ENCODE measurements at regions of chr10 and their contacts with region 1.

Region 1: GRCh38 chr10:122342293-122343134 is 32.0 kb upstream of the PLEKHA1 start:
- DNase-seq: no peak
- H3K4me3 Mint-ChIP-seq: no peak overlapping the region
- H3K27ac Mint-ChIP-seq: no peak overlapping the region
- H3K4me1 Mint-ChIP-seq: peaks cover 5% of the 10 kb centered on the region
- H3K27me3 Mint-ChIP-seq: peaks cover 5% of the 10 kb centered on the region

Region 2: DNA sequence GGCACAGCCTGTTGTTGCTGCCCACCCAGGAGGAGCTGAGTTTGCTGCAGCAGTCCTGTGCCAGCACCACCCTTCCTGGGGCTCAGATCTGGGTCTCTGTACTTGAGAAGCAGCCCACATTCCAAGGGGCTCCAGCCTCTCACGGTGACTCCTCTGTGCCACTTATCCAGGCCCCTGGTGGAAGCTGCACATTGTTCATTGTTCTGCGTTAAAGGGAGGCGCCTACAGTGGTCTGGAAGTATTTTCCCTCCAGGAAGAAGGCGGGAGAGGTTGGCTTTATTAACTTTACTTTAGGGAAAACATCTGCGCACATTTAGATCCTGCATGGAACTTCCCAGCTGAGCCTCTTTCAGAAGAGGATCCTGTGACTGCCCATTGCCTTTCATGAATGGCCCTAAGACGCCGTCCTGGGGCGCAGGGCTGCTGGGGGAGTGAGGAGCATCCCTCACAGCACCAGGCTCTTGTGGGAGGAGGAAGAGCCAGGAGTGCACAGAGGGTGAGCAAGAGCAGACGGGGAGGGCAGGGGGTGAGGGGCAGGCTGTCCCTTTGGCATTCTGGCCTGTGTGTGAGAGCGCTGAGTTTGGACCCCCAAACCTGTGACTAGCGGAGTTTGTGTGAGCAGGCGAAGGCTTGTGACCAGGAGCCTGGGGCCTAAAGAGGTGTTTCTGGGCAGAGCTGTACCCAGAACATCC is 170.1 kb before region 1 on chr10:
- intact Hi-C with region 1: no loop called
- DNase-seq: no peak
- H3K4me3 Mint-ChIP-seq: no peak overlapping the region
- H3K27ac Mint-ChIP-seq: no peak overlapping the region
- H3K4me1 Mint-ChIP-seq: no peaks in the 10 kb centered on the region
- H3K27me3 Mint-ChIP-seq: no peaks in the 10 kb centered on the region

Region 3: GRCh38 chr10:122298598-122299301 is 43.8 kb before region 1 on chr10:
- intact Hi-C with region 1: loop called (anchors 2 kb)
- DNase-seq: peak; percentile 34
- H3K4me3 Mint-ChIP-seq: no peak overlapping the region
- H3K27ac Mint-ChIP-seq: no peak overlapping the region
- H3K4me1 Mint-ChIP-seq: peaks cover 10% of the 10 kb centered on the region
- H3K27me3 Mint-ChIP-seq: peaks cover 6% of the 10 kb centered on the region

Region 4: GRCh38 chr10:122323941-122324675 is 18.4 kb before region 1 on chr10:
- intact Hi-C with region 1: no loop called
- DNase-seq: no peak
- H3K4me3 Mint-ChIP-seq: no peak overlapping the region
- H3K27ac Mint-ChIP-seq: no peak overlapping the region
- H3K4me1 Mint-ChIP-seq: no peaks in the 10 kb centered on the region
- H3K27me3 Mint-ChIP-seq: peaks cover 5% of the 10 kb centered on the region

Region 5: DNA sequence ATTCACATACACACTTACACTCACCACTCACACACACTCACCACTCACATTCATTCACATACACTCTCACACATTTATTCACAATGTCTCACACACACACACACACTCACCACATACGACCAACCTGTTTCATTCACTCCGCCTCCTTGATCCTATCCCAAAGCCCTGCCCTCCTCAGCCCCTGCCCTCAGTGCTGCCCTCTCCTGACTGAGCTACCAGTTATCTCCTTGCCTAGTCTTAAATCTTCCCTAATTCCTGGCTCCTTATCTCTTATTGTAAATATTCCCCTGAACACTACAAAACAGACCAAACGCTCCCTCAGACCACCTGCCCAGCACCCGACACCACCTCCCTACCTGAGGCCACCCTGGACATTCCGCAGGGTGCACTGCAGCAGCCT is 383.3 kb after region 1 on chr10:
- intact Hi-C with region 1: no loop called
- DNase-seq: no peak
- H3K4me3 Mint-ChIP-seq: no peak overlapping the region
- H3K27ac Mint-ChIP-seq: no peak overlapping the region
- H3K4me1 Mint-ChIP-seq: no peaks in the 10 kb centered on the region
- H3K27me3 Mint-ChIP-seq: no peaks in the 10 kb centered on the region